A673 (cell line): ENCODE measurements at regions of chr2 and their contacts with region 1.

Region 1: GRCh38 chr2:13006829-13007717 is 290.3 kb downstream of the TRIB2 start:
- DNase-seq: peak; percentile 90
- H3K4me3 ChIP-seq: peak overlapping the region; percentile 15
- H3K27ac ChIP-seq: no peak overlapping the region
- H3K4me1 ChIP-seq: peaks cover 35% of the 10 kb centered on the region
- H3K27me3 ChIP-seq: no peaks in the 10 kb centered on the region
- CTCF ChIP-seq: peak; percentile 78

Region 2: GRCh38 chr2:11688222-11689069 is 1318.6 kb before region 1 on chr2:
- CTCF ChIA-PET with region 1: interaction called, 3 read pairs
- POLR2A ChIA-PET with region 1: no interaction called
- intact Hi-C with region 1: loop called (anchors 5 kb)
- DNase-seq: peak; percentile 90
- H3K4me3 ChIP-seq: peak overlapping the region; percentile 25
- H3K27ac ChIP-seq: no peak overlapping the region
- H3K4me1 ChIP-seq: peaks cover 6% of the 10 kb centered on the region
- H3K27me3 ChIP-seq: peaks cover 14% of the 10 kb centered on the region
- CTCF ChIP-seq: peak; percentile 97

Region 3: GRCh38 chr2:12282780-12283695 is 724.0 kb before region 1 on chr2:
- CTCF ChIA-PET with region 1: no interaction called
- POLR2A ChIA-PET with region 1: no interaction called
- intact Hi-C with region 1: loop called (anchors 10 kb)
- DNase-seq: peak; percentile 39
- H3K4me3 ChIP-seq: no peak overlapping the region
- H3K27ac ChIP-seq: no peak overlapping the region
- H3K4me1 ChIP-seq: peaks cover 31% of the 10 kb centered on the region
- H3K27me3 ChIP-seq: no peaks in the 10 kb centered on the region
- CTCF ChIP-seq: no peak

Region 4: GRCh38 chr2:12555012-12555645 is 451.9 kb before region 1 on chr2:
- CTCF ChIA-PET with region 1: interaction called, 7 read pairs
- POLR2A ChIA-PET with region 1: no interaction called
- intact Hi-C with region 1: loop called (anchors 5 kb)
- DNase-seq: peak; percentile 94
- H3K4me3 ChIP-seq: no peak overlapping the region
- H3K27ac ChIP-seq: peak overlapping the region; percentile 75
- H3K4me1 ChIP-seq: peaks cover 28% of the 10 kb centered on the region
- H3K27me3 ChIP-seq: no peaks in the 10 kb centered on the region
- CTCF ChIP-seq: peak; percentile 32; the same call in 1 of the 2 replicates

Region 5: GRCh38 chr2:12778369-12778768 is 228.7 kb before region 1 on chr2:
- CTCF ChIA-PET with region 1: no interaction called
- POLR2A ChIA-PET with region 1: no interaction called
- intact Hi-C with region 1: loop called (anchors 5 kb)
- DNase-seq: peak; percentile 82
- H3K4me3 ChIP-seq: no peak overlapping the region
- H3K27ac ChIP-seq: peak overlapping the region; percentile 50
- H3K4me1 ChIP-seq: peaks cover 46% of the 10 kb centered on the region
- H3K27me3 ChIP-seq: no peaks in the 10 kb centered on the region
- CTCF ChIP-seq: no peak

Region 6: GRCh38 chr2:13034861-13035260 is 27.8 kb after region 1 on chr2:
- CTCF ChIA-PET with region 1: no interaction called
- POLR2A ChIA-PET with region 1: no interaction called
- intact Hi-C with region 1: no loop called
- DNase-seq: no peak
- H3K4me3 ChIP-seq: no peak overlapping the region
- H3K27ac ChIP-seq: no peak overlapping the region
- H3K4me1 ChIP-seq: no peaks in the 10 kb centered on the region
- H3K27me3 ChIP-seq: no peaks in the 10 kb centered on the region
- CTCF ChIP-seq: no peak